Activated CD4-positive, alpha-beta T cell treated with anti-CD3 and anti-CD28 coated beads for 36 hours (primary cell): ENCODE measurements at regions of chr12 and their contacts with region 1.

Region 1: DNA sequence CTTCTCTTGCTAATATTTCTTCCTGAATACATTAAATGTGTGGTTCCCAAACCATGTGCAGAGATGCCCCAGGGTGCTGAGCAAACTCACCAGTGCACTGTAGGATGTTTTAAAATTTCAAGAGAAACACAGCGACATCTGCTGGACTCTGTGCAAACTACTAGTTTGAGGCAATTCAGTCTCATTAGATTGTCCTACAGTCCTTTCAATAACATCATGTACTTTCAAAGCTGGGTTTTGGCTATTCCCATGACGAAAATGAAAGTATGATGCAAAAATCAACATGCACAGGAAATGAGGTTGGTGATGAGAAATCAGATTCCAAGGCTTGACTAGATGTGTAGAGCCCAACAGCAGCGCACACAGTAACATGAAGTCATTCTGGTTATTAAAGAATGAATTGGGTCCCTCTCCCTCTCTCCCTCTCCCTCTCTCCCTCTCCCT is 66.3 kb downstream of the CLIP1 start:
- DNase-seq: peak; percentile 73
- ATAC-seq: peak; percentile 95
- H3K4me3 Mint-ChIP-seq: no peak overlapping the region
- H3K27ac Mint-ChIP-seq: no peak overlapping the region
- H3K4me1 Mint-ChIP-seq: peaks cover 13% of the 10 kb centered on the region
- H3K27me3 Mint-ChIP-seq: no peaks in the 10 kb centered on the region

Region 2: DNA sequence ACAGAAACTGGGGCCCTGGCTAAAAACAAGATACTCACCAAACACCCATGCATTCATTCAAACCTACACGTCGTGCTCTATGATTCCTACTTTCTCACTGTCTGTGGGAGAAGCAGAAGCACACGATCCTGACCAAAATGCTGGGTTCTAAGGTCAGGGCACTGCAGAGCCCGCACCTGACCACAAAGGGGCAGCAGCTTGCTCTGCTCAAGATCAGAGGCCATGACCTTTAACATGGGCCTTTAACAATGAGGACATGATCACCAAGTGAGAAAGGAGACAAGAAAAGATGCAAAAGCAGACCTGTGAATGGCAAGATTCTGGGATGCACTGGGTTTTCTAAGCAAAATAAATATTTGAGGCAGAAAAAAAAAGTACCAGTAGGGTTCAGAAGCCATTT is 49.8 kb before region 1 on chr12:
- CTCF ChIA-PET with region 1: interaction called, 14 read pairs
- POLR2A ChIA-PET with region 1: no interaction called
- intact Hi-C with region 1: no loop called
- DNase-seq: peak; percentile 14
- ATAC-seq: peak; percentile 36
- H3K4me3 Mint-ChIP-seq: no peak overlapping the region
- H3K27ac Mint-ChIP-seq: no peak overlapping the region
- H3K4me1 Mint-ChIP-seq: no peaks in the 10 kb centered on the region
- H3K27me3 Mint-ChIP-seq: no peaks in the 10 kb centered on the region

Region 3: DNA sequence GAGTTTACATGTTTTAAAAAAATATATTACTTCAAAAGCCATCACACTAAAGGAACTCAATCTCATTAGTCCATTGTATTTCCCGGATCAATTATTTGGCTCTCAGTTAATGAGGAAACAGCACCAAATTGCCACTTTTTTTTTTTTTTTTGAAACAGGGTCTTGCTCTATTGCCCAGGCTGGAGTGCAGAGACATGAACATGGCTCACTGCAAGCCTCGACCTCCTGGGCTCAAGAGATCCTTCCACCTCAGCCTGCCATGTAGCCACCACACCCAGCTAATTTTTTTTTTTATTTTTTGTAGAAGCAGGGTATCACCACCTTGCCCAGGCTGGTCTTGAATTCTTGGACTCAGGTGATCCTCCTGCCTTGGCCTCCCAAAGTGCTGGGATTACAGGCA is 11.2 kb before region 1 on chr12:
- CTCF ChIA-PET with region 1: interaction called, 10 read pairs
- POLR2A ChIA-PET with region 1: no interaction called
- intact Hi-C with region 1: no loop called
- DNase-seq: no peak
- ATAC-seq: no peak
- H3K4me3 Mint-ChIP-seq: no peak overlapping the region
- H3K27ac Mint-ChIP-seq: no peak overlapping the region
- H3K4me1 Mint-ChIP-seq: no peaks in the 10 kb centered on the region
- H3K27me3 Mint-ChIP-seq: no peaks in the 10 kb centered on the region

Region 4: GRCh38 chr12:122374707-122375106 is 18.5 kb after region 1 on chr12:
- CTCF ChIA-PET with region 1: interaction called, 10 read pairs
- POLR2A ChIA-PET with region 1: no interaction called
- intact Hi-C with region 1: no loop called
- DNase-seq: no peak
- ATAC-seq: no peak
- H3K4me3 Mint-ChIP-seq: no peak overlapping the region
- H3K27ac Mint-ChIP-seq: no peak overlapping the region
- H3K4me1 Mint-ChIP-seq: peaks cover 10% of the 10 kb centered on the region
- H3K27me3 Mint-ChIP-seq: no peaks in the 10 kb centered on the region

Region 5: GRCh38 chr12:122471324-122472226 is 115.4 kb after region 1 on chr12:
- CTCF ChIA-PET with region 1: interaction called, 13 read pairs
- POLR2A ChIA-PET with region 1: no interaction called
- intact Hi-C with region 1: no loop called
- DNase-seq: no peak
- ATAC-seq: peak; percentile 40
- H3K4me3 Mint-ChIP-seq: no peak overlapping the region
- H3K27ac Mint-ChIP-seq: no peak overlapping the region
- H3K4me1 Mint-ChIP-seq: peaks cover 28% of the 10 kb centered on the region
- H3K27me3 Mint-ChIP-seq: no peaks in the 10 kb centered on the region

Region 6: GRCh38 chr12:122558745-122559641 is 202.8 kb after region 1 on chr12:
- CTCF ChIA-PET with region 1: no interaction called
- POLR2A ChIA-PET with region 1: no interaction called
- intact Hi-C with region 1: no loop called
- DNase-seq: no peak
- ATAC-seq: no peak
- H3K4me3 Mint-ChIP-seq: no peak overlapping the region
- H3K27ac Mint-ChIP-seq: no peak overlapping the region
- H3K4me1 Mint-ChIP-seq: peaks cover 4% of the 10 kb centered on the region
- H3K27me3 Mint-ChIP-seq: no peaks in the 10 kb centered on the region